BJ (cell line): ENCODE measurements at regions of chr1 and their contacts with region 1.

Region 1: GRCh38 chr1:179002552-179003345 is 22.9 kb upstream of the FAM20B start:
- DNase-seq: no peak
- H3K4me3 ChIP-seq: no peak overlapping the region
- H3K27me3 ChIP-seq: no peaks in the 10 kb centered on the region
- CTCF ChIP-seq: peak; percentile 92

Region 2: DNA sequence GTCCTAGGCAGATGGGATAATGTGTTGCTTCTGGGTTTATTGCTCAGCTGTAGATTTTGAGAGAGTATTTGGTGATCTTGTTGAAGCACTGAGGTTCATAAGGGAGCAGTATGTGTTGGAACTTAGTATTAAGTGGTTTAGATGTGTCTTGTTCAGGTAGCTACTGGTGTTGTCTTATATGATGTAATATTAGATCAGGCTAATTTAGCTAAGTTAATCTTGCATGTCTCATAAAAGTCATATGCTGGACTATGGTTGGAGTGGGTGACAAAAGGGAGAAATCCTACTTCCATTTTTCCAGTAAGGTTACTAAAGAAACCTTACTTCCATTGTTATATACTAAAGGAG is 702.4 kb before region 1 on chr1:
- CTCF ChIA-PET with region 1: interaction called, 11 read pairs
- POLR2A ChIA-PET with region 1: no interaction called
- DNase-seq: no peak
- H3K4me3 ChIP-seq: no peak overlapping the region
- H3K27me3 ChIP-seq: no peaks in the 10 kb centered on the region
- CTCF ChIP-seq: no peak

Region 3: DNA sequence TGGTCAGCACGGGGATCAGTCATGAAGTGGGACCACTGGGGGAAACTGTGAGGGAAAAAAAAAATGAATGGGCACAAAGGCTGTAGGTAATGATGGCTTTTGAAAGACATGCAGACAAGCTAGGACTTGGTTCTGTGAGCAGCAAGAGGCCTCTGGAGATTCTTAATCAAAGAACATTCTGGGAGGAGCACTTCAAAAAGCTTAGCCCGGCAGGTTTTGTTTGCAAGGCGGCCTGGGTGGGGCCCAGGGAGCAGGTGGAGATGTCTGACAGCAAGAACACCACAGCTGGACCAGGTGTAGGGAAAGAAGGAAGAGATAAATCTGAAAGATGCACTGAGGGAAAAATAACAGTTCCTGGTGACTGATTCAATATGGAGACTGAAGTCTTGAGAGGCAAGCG is 483.9 kb before region 1 on chr1:
- CTCF ChIA-PET with region 1: no interaction called
- POLR2A ChIA-PET with region 1: no interaction called
- DNase-seq: no peak
- H3K4me3 ChIP-seq: no peak overlapping the region
- H3K27me3 ChIP-seq: peaks cover 2% of the 10 kb centered on the region
- CTCF ChIP-seq: no peak

Region 4: DNA sequence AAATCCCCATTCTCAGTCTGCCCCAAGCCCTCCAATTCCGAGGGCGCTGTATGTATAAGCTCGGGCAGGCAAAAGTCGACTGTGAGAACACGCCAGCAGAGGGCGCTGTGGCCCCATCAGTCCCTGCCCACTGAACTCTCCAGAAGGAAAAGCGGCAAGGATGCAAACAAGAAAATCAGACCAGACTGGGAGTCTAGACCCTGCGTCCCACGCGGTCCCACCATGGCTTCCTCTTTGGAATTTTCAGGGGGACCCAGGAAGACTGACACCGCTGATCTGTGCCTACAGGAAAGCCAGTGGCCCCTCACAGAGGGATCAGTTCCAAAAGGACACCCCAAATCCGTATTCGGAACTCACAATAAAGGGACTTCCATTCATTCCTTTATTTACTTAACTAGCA is 470.4 kb before region 1 on chr1:
- CTCF ChIA-PET with region 1: interaction called, 375 read pairs
- POLR2A ChIA-PET with region 1: no interaction called
- DNase-seq: no peak
- H3K4me3 ChIP-seq: no peak overlapping the region
- H3K27me3 ChIP-seq: no peaks in the 10 kb centered on the region
- CTCF ChIP-seq: peak; percentile 90

Region 5: DNA sequence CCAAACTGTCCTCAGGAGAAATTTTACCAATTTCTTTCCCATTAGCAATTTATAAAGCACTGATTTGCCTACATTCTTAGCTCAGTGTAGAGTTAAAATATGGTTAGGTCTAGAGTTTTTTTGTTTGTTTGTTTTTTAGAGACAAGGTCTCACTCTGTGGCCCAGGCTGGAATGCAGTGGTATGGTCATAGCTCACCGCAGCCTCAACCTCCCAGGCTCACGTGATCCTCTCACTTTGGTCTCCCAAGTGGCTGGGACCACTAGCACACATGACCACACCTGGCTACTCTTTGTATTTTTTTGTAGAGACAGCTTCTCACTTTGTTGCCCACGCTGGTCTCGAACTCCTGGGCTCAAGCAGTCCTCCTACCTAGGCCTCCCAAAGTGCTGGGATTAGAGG is 288.3 kb before region 1 on chr1:
- CTCF ChIA-PET with region 1: no interaction called
- POLR2A ChIA-PET with region 1: interaction called, 19 read pairs
- DNase-seq: no peak
- H3K4me3 ChIP-seq: no peak overlapping the region
- H3K27me3 ChIP-seq: no peaks in the 10 kb centered on the region
- CTCF ChIP-seq: no peak

Region 6: GRCh38 chr1:178774263-178774662 is 228.5 kb before region 1 on chr1:
- CTCF ChIA-PET with region 1: interaction called, 22 read pairs
- POLR2A ChIA-PET with region 1: no interaction called
- DNase-seq: no peak
- H3K4me3 ChIP-seq: no peak overlapping the region
- H3K27me3 ChIP-seq: no peaks in the 10 kb centered on the region
- CTCF ChIP-seq: no peak

Region 7: DNA sequence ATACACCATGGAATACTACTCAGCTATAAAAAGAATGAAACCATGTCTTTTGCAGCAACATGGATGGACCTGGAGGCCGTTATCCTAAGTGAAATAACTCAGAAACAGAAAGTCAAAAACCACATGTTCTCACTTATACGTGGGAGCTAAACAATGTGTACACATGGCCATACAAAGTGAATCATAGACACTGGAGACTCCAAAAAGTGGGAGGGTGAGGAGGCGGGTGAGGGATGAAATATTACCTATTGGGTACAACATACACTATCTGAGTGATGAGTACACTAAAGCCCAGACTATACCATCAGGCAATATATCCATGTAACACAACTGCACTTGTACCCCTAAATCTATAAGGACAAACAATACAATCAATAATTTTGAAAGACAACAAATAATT is 16.5 kb before region 1 on chr1:
- CTCF ChIA-PET with region 1: no interaction called
- POLR2A ChIA-PET with region 1: no interaction called
- DNase-seq: no peak
- H3K4me3 ChIP-seq: no peak overlapping the region
- H3K27me3 ChIP-seq: no peaks in the 10 kb centered on the region
- CTCF ChIP-seq: no peak

Region 8: GRCh38 chr1:179016747-179017549 is 14.2 kb after region 1 on chr1:
- CTCF ChIA-PET with region 1: interaction called, 15 read pairs
- POLR2A ChIA-PET with region 1: no interaction called
- DNase-seq: peak; percentile 84
- H3K4me3 ChIP-seq: no peak overlapping the region
- H3K27me3 ChIP-seq: no peaks in the 10 kb centered on the region
- CTCF ChIP-seq: no peak